Activated CD8-positive, alpha-beta T cell treated with anti-CD3 and anti-CD28 coated beads for 36 hours (primary cell): ENCODE measurements at regions of chr17 and their contacts with region 1.

Region 1: GRCh38 chr17:14069251-14070021 is at the start of gene COX10:
- DNase-seq: peak; percentile 88
- ATAC-seq: peak; percentile 98
- H3K4me3 Mint-ChIP-seq: peak within 1 kb of the TSS; percentile 97
- H3K27ac Mint-ChIP-seq: peak within 1 kb of the TSS; percentile 96
- H3K4me1 Mint-ChIP-seq: peaks cover 45% of the 10 kb centered on the region
- H3K27me3 Mint-ChIP-seq: no peaks in the 10 kb centered on the region
- CTCF ChIP-seq: no peak
- total RNA-seq, gene COX10: 26.0 to 28.6 TPM

Region 2: DNA sequence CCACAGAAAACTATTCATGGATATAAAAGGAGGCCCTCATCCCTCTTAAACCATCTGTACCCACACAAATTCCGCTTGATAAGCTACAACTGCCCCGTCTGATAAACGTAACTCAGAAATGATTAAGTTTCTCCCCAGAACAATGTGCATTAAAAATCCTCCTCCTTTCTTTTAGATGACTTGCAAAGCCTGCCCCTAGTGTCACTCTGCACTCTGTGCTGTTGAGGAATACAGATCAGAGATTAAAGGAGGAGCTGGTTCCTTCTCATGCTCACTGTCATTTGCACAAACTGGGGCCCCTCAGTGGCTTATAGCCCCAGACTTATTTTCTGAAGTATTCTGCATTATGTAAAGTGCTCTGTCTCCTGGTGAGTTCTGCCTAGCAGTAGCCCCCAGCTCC is 134.0 kb after region 1 on chr17:
- CTCF ChIA-PET with region 1: no interaction called
- POLR2A ChIA-PET with region 1: interaction called, 4 read pairs
- intact Hi-C with region 1: loop called (anchors 10 kb)
- DNase-seq: peak; percentile 44
- ATAC-seq: peak; percentile 36
- H3K4me3 Mint-ChIP-seq: no peak overlapping the region
- H3K27ac Mint-ChIP-seq: peak overlapping the region; percentile 69
- H3K4me1 Mint-ChIP-seq: peaks cover 81% of the 10 kb centered on the region
- H3K27me3 Mint-ChIP-seq: no peaks in the 10 kb centered on the region
- CTCF ChIP-seq: peak; percentile 28

Region 3: DNA sequence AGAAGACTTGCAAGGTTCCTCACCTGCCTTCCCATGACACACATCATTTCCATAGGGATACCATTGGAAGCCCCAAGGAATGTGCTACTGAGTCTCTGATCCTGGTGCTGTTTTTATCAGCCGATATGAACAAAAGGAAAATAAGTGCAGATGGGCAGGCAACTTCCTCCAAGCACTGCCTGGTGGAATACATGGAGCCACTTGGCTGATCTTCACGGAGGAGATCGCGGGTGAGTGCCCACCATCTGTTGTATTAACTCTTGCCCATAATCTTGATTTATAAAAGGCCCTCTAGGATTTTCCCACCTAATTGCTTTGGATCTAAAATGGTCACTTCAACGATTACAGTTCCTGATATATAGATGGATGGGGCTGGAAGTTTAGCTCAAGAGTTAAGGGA is 192.0 kb after region 1 on chr17:
- CTCF ChIA-PET with region 1: no interaction called
- POLR2A ChIA-PET with region 1: no interaction called
- intact Hi-C with region 1: no loop called
- DNase-seq: no peak
- ATAC-seq: no peak
- H3K4me3 Mint-ChIP-seq: no peak overlapping the region
- H3K27ac Mint-ChIP-seq: no peak overlapping the region
- H3K4me1 Mint-ChIP-seq: no peaks in the 10 kb centered on the region
- H3K27me3 Mint-ChIP-seq: no peaks in the 10 kb centered on the region
- CTCF ChIP-seq: no peak